Right cardiac atrium (tissue), 5 donors: ENCODE measurements at regions of chr2 and their contacts with region 1.

Region 1: GRCh38 chr2:218466016-218466521 is 47.1 kb downstream of the VIL1 start:
- DNase-seq: no peak
- ATAC-seq: peak in 1 of 2 donors; percentile 25
- H3K4me3 ChIP-seq: no peak overlapping the region
- H3K27ac ChIP-seq: no peak overlapping the region
- H3K4me1 ChIP-seq: no peaks in the 10 kb centered on the region
- H3K27me3 ChIP-seq: no peaks in the 10 kb centered on the region

Region 2: DNA sequence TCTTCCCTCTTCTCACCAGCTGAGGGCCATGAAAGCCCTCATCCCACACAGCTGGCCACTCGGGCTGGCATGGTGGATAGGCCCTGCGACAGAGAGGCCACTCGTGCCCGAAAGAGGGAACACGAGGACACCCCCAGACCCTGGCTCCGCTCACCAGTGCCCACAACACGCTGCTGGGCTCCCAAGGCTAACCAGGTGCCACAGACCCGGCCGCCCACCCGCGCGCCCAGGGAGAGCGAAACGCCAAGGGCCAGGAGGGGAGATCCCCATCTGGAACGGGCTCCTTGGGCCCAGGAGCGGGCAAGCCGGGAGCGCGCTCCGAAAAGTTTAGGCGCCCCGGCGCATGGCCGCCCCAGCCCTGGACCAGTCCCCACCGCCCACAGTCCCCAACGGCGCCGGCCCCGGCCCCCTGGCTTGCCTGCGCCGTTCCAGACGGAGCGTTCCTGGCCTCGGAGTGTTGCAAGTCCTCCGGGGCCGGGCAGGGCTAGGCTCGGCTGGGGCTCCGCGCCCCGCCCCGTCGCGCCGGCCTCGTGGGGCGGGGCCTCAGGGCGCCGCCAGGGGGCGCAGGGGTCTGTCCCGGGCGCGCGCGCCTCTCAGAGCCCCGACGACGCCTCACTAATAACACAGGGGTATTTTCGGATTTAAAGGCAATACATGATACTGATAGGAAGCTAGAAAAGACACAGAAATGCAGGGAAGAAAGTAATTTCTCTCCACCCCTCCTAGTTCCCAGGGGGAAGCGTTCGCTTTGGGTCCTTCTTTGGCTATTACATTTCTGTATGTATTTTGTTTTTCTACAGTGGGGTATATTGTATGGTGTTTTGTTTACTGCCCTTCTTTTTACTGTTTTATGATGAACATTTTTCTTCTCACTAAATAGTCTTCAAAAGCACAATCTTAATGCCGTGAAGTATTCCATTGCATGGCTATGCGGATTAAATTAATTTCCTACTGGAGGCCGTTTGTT is 173.7 kb before region 1 on chr2 and contains the start of gene TMBIM1:
- intact Hi-C with region 1: loop called (anchors 10 kb)
- DNase-seq: peak; percentile 87 to 95 (median 94)
- ATAC-seq: peak; percentile 86 to 93
- H3K4me3 ChIP-seq: peak within 1 kb of the TSS; percentile 48
- H3K27ac ChIP-seq: peak within 1 kb of the TSS; percentile 86
- H3K4me1 ChIP-seq: peaks cover 14% of the 10 kb centered on the region
- H3K27me3 ChIP-seq: no peaks in the 10 kb centered on the region
- total RNA-seq, gene TMBIM1: 95.2 to 158 (median 118) TPM

Region 3: GRCh38 chr2:218406209-218406948 is 59.7 kb before region 1 on chr2:
- intact Hi-C with region 1: loop called in 2 of 4 experiments (anchors 5 to 10 kb)
- DNase-seq: peak; percentile 98 to 100 (median 99)
- ATAC-seq: peak; percentile 91
- H3K4me3 ChIP-seq: peak overlapping the region; percentile 50
- H3K27ac ChIP-seq: peak overlapping the region; percentile 96
- H3K4me1 ChIP-seq: peaks cover 6% of the 10 kb centered on the region
- H3K27me3 ChIP-seq: no peaks in the 10 kb centered on the region

Region 4: DNA sequence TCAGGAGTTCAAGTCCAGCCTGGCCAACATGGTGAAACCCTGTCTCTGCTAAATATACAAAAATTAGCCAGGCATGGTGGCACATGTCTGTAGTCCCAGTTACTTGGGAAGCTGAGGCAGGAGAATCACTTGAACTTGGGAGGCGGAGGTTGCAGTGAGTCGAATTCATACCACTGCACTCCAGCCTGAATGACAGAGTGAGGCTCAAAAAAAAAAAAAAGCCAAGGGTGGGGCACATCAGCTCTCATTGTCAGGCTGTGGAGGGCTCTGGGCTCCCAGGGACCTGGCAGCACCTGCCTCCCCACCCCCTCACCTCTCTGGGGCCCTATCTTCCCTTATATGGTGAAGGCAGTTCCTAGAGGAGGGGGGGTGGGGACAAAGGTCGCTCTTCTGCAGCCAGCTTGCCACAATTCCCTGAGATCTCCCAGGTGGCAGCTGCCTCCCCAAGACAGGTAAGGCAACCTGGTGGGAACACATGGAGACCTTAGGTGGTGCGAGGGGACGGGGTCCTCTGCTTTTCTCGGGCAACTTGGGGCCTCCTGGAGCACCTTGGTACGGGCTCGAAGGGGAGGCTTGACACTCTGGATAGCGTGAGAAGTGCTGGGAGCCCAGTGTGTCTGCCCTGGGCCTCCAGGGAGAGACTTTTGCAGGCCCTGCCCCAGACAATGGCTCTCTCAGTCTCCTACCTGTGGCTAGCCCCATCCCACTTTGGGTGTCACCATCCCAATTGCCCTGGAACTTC is 47.2 kb before region 1 on chr2 and contains the start of gene VIL1:
- intact Hi-C with region 1: loop called in 1 of 4 experiments (anchors 10 kb)
- DNase-seq: no peak
- ATAC-seq: peak in 1 of 2 donors; percentile 59
- H3K4me3 ChIP-seq: no peak within 1 kb of the TSS
- H3K27ac ChIP-seq: no peak within 1 kb of the TSS
- H3K4me1 ChIP-seq: no peaks in the 10 kb centered on the region
- H3K27me3 ChIP-seq: no peaks in the 10 kb centered on the region
- total RNA-seq, gene VIL1: not detected